Dendritic cell treated with granulocyte-macrophage colony-stimulating factor and Interleukin-4, amounts not matched to agents 40 ng/mL and 50 ng/mL, for 4 days (primary cell): ENCODE measurements at regions of chr22 and their contacts with region 1.

Region 1: GRCh38 chr22:45441138-45441537 is 27.6 kb downstream of the RIBC2 start:
- H3K4me3 Mint-ChIP-seq: no peak overlapping the region
- H3K27ac Mint-ChIP-seq: no peak overlapping the region
- H3K4me1 Mint-ChIP-seq: peaks cover 9% of the 10 kb centered on the region
- H3K27me3 Mint-ChIP-seq: peaks cover 30% of the 10 kb centered on the region

Region 2: GRCh38 chr22:45553351-45554039 is 112.4 kb after region 1 on chr22:
- intact Hi-C with region 1: loop called (anchors 5 kb)
- H3K4me3 Mint-ChIP-seq: no peak overlapping the region
- H3K27ac Mint-ChIP-seq: no peak overlapping the region
- H3K4me1 Mint-ChIP-seq: peaks cover 31% of the 10 kb centered on the region
- H3K27me3 Mint-ChIP-seq: peaks cover 59% of the 10 kb centered on the region